ENCODE measurements at regions of chr1 and their contacts with region 1.

Region 1: DNA sequence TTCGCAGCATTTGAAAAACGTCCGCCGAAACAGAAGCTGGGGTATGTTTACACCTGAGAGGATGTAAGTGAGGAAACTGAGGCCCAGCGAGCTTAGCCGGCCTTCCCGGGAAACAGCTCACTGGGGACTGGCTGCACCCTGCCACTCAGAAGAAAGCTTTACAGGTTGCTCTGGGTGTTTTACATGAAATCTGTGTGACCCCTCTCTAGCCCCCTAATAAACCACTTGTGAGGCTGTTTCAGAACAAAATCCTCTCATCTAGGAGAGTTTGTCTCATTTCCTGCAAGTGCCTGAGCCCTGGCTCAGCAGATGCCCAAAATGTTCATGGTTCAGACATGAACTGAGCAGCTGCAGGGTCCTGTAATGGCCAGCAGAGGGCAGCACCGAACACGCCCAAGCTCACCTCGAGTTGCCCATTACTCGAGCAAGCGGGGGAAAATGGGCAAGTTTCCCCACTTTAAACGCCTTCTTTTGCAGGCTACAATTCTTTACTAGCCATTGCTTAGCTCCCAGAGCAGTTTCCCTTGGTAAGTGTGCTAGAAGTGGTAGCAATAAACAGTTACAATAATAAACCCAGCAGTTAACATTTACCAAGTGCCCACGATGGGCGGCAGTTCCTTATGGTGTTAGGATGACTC is 76.4 kb downstream of the FHAD1 start:
- DNase-seq: peak; percentile 46 to 72
- H3K4me3 ChIP-seq: no peak overlapping the region
- H3K27ac ChIP-seq: no peak overlapping the region
- H3K4me1 ChIP-seq: no peaks in the 10 kb centered on the region
- H3K27me3 ChIP-seq: no peaks in the 10 kb centered on the region
- CTCF ChIP-seq: peak; percentile 91

Region 2: GRCh38 chr1:15337656-15338402 is 14.4 kb after region 1 on chr1:
- CTCF ChIA-PET with region 1: interaction called, 8 read pairs
- POLR2A ChIA-PET with region 1: no interaction called
- intact Hi-C with region 1: loop called (anchors 2 kb)
- DNase-seq: peak; percentile 43 to 56
- H3K4me3 ChIP-seq: no peak overlapping the region
- H3K27ac ChIP-seq: no peak overlapping the region
- H3K4me1 ChIP-seq: peaks cover 45% of the 10 kb centered on the region
- H3K27me3 ChIP-seq: no peaks in the 10 kb centered on the region
- CTCF ChIP-seq: no peak

Region 3: DNA sequence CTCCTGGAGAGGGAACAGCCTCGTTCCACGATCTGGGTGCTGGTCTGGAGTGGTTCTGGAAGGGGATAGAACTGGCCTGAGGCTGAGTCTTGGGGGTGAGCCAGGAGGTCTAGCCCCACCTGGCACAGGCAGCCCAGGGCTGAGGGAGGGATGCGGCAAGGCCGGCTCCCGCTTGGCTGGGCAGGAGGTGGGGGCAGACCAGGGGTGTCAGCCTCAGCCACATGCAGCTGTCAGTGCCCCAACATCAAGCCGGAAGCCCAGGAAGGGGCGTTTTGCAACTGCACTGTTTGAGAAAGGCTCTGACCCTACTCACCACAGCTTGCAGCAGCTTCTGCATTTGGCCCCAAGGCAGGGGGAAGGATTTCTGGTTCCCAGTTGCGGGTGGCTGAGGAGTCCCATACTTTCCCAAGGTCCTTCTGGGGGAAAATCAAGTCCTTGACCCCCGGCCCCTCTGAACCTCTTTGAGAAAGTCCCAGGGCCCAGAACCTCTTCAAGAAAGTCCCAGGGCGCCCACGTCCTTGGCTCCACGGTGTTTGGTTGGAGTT is 88.2 kb after region 1 on chr1:
- CTCF ChIA-PET with region 1: interaction called, 9 read pairs
- POLR2A ChIA-PET with region 1: interaction called, 4 read pairs
- intact Hi-C with region 1: loop called (anchors 1 kb)
- DNase-seq: peak; percentile 46 to 66
- H3K4me3 ChIP-seq: peak overlapping the region; percentile 75
- H3K27ac ChIP-seq: peak overlapping the region; percentile 57
- H3K4me1 ChIP-seq: peaks cover 35% of the 10 kb centered on the region
- H3K27me3 ChIP-seq: no peaks in the 10 kb centered on the region
- CTCF ChIP-seq: no peak

Region 4: GRCh38 chr1:15424146-15424667 is 100.7 kb after region 1 on chr1:
- CTCF ChIA-PET with region 1: interaction called, 6 read pairs
- POLR2A ChIA-PET with region 1: interaction called, 3 read pairs
- intact Hi-C with region 1: loop called (anchors 1 kb)
- DNase-seq: peak; percentile 77 to 79
- H3K4me3 ChIP-seq: no peak overlapping the region
- H3K27ac ChIP-seq: peak overlapping the region; percentile 44; the same call in 1 of the 2 replicates
- H3K4me1 ChIP-seq: peaks cover 27% of the 10 kb centered on the region
- H3K27me3 ChIP-seq: no peaks in the 10 kb centered on the region
- CTCF ChIP-seq: no peak

Region 5: DNA sequence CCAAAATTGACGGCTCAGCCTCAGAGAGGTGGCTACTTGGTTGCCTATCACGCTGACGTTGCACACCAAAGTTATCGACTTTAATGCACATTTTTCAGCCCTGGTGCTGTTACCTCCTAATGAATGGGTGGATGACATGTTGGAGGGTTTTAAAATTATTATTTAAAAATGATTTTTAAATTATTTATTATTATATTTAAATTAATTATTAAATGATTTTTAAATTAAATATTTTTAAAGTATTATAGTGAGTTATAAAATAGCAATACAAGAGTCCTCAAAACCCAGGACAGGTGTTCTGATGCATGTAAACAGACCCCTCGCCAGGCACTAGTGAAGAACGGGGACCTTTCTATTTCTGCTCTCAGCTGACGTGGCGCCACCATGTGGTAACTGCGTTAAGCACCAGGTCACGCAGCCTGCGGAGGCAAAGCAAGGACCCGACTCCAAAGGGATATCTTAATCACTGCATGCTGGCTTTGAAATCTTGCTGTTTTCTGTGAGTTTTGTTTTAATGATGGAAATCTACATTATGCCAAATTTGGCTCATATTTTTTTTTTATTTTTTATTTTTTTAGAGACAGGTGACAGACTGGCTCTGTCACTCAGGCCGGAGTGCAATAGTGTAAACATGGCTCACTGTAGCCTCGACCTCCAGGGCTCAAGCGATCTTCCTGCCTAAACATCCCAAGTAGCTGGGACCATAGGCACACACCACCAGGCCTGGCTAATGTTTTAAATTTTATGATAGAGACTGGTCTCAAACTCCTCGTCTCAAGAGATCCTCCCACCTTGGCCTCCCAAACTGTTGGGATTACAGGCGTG is 177.9 kb after region 1 on chr1:
- CTCF ChIA-PET with region 1: no interaction called
- POLR2A ChIA-PET with region 1: no interaction called
- intact Hi-C with region 1: loop called (anchors 2 kb)
- DNase-seq: peak; percentile 39 to 65
- H3K4me3 ChIP-seq: no peak overlapping the region
- H3K27ac ChIP-seq: no peak overlapping the region
- H3K4me1 ChIP-seq: no peaks in the 10 kb centered on the region
- H3K27me3 ChIP-seq: no peaks in the 10 kb centered on the region
- CTCF ChIP-seq: peak; percentile 74